ENCODE measurements at regions of chr15 and their contacts with region 1.

Region 1: DNA sequence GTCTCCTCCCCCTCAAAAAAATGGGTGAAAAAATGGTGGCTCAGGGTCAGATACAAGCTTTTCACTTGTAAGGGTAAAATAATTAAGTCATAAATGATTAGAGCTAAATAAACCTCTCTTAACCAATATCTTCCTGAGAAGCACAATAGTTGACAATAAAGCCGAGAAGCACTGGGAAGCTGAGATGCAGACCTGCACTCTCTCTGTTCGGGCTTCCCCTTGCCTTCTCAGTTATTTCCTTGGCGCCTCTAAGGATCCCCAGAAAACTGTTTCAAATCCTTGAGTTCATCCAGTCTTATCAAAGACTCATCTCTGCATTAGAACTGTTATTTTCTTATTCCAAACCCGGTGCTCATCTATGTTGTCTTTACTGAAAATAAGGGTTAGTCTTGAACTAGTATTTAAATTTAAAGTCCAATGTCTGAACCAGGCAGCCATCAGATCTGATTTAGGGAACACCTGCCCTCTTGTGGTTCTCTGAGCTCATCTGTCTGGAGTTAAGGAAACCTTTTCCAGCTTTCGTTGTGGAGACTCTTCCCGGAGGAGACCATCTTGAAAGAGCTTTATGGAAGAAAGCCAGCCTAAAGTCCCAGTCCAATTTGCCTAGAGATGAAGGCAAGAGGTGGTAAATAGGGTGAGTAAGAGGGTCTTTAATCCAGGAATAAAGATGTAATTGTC is 256.4 kb upstream of the MCTP2 start:
- DNase-seq: no peak
- H3K4me3 ChIP-seq: no peak overlapping the region
- H3K4me1 ChIP-seq: no peaks in the 10 kb centered on the region
- H3K27me3 ChIP-seq: no peaks in the 10 kb centered on the region

Region 2: DNA sequence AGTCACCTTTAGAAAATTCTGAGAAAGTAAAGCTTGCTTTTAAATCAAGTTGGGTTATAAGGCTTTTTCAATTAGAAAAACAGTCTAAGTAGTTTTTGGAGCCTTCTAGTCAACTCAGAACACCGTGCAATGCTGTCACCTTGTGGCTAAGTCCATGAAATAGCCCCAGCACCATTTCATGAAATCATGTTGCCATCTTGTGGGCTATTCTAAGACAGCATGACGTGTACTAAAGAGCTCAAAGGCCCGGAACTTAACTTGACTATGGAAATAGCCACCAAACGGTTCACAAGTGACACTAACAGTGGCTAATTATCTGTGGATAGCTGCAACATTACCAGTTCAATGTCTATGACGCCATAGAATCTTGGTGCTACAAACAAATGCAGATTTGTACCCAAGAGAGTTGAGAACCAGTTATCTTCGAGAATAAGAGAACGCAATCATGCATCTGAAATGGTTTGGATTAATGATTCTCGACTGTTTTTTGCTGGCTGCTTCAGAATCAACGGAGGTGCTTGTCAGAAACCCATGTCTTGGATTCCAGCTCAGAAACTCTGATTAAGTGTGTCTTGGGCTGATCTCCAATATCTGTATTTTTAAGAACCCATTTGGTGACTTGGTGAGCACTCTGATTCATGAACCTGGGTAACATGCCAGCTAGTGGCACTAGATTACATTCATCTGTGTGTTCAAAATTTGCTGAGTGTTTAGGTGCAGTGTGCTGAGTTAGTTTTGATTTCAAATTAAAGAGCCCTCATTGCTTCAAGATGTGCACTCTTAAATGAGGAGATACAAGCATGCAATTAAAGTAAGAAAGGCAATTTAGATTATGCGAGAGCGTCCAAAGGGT is 145.2 kb after region 1 on chr15:
- in situ Hi-C with region 1: loop called (anchors 25 kb)
- DNase-seq: peak; percentile 63 to 66
- H3K4me3 ChIP-seq: no peak overlapping the region
- H3K4me1 ChIP-seq: no peaks in the 10 kb centered on the region
- H3K27me3 ChIP-seq: no peaks in the 10 kb centered on the region

Measured in HAP-1 (cell line).